Breast epithelium (tissue), 4 donors: ENCODE measurements at regions of chr6 and their contacts with region 1.

Region 1: GRCh38 chr6:84943905-84944304 is 179.5 kb upstream of the TBX18 start:
- DNase-seq: no peak
- H3K4me3 ChIP-seq: no peak overlapping the region
- H3K27ac ChIP-seq: no peak overlapping the region
- H3K4me1 ChIP-seq: no peaks in the 10 kb centered on the region
- H3K27me3 ChIP-seq: no peaks in the 10 kb centered on the region
- CTCF ChIP-seq: no peak
- POLR2A ChIP-seq: no peak

Region 2: GRCh38 chr6:85245004-85245403 is 301.1 kb after region 1 on chr6:
- intact Hi-C with region 1: loop called (anchors 5 kb)
- DNase-seq: no peak
- H3K4me3 ChIP-seq: no peak overlapping the region
- H3K27ac ChIP-seq: no peak overlapping the region
- H3K4me1 ChIP-seq: no peaks in the 10 kb centered on the region
- H3K27me3 ChIP-seq: no peaks in the 10 kb centered on the region
- CTCF ChIP-seq: no peak
- POLR2A ChIP-seq: no peak